Caco-2 (cell line): ENCODE measurements at regions of chr11 and their contacts with region 1.

Region 1: DNA sequence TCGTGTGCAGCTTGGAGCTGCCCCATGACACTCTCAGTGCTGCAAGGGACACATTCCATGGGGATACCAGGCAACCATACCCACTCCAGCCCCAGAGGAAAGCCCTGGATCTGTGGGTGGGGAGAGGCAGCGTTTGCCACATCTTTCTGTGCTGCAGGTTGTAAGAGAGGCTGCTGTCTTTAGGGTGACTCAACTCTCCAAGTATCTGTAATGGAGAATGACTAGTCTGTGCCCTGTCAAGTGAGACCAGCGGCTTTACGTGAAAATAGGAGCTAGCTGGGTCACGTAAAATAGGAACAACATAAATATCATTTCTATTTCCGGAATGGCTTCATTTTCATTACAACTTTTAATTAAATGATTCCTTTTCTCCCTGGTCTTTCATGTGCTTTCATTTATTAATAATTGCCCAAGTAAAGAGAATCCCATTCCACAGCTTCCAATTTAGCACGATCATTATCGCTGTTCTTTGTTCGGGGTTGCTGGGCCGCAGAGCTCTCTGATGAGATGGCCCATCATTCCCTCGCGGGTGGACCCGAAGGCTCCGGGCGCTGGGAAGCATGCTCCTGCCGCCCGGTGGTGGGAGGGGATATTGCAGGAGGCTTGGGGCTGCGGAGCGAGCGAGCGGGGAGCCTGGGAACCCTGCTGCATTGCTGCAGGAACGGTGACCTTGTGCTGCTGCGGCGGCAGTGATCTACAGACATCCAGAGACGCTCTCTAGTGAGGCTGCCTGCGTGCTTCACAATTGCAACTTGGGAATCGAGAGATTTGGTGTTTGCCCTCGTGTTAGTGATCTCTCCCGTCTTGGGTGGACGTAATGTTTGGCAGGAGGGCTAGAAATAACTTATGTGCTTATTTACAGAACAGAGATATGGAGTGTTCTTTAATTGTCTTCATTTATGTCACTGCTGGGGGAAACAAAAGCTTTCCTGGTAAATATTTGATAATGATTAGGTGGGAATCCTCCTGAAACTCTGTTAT is 10.6 kb downstream of the SLC6A5 start:
- DNase-seq: peak; percentile 80 to 91
- H3K4me3 ChIP-seq: no peak overlapping the region
- H3K4me3 Mint-ChIP-seq: peak overlapping the region; percentile 57
- H3K27ac Mint-ChIP-seq: no peak overlapping the region
- H3K4me1 ChIP-seq: 0 out of 2 replicates have a peak, but pooled peaks cover 3% of the 10 kb centered on the region
- H3K4me1 Mint-ChIP-seq: peaks cover 9% of the 10 kb centered on the region
- H3K27me3 ChIP-seq: no peaks in the 10 kb centered on the region
- H3K27me3 Mint-ChIP-seq: peaks cover 23% of the 10 kb centered on the region
- CTCF ChIP-seq: peak; percentile 92 to 97

Region 2: DNA sequence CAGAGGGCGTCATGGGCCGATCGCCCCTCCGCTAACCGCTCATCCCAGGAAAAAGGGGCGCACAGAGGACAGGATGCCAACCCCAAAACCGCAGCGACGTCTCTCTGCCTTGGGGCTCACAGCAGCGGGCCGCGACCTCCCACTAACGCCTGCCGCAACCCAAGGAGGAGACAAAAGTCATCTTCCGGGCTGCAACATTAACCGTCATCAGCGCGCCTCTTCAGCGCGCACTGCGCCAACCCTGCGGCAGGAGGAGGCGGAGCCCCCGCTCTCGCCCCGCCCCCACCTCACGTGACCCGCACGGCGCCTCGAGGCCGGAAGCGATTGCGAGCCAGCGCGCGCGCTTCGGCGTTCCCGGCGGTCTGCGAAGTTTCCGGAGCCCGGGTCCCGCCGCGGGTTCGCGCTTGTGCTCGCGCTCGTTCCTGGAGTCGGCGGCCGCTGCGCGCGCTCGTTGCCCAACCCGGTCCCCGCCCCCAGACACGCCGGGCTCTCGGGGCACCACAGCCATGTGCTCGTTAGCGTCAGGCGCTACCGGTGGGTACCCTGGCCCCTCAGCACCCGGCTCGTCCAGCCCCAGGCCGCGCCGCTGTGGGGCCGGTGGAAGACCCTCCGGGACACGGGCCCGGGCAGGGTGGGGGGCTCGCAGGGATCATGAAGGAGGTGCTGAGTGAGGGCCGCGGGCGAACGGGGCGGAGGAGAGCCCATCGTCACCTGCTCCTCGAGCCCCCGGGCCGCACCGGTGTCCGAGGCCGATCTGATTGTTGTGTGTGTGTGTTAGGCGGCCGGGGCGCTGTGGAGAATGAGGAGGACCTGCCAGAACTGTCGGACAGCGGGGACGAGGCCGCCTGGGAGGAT is 222.5 kb before region 1 on chr11 and contains the start of gene PRMT3:
- CTCF ChIA-PET with region 1: no interaction called
- POLR2A ChIA-PET with region 1: no interaction called
- intact Hi-C with region 1: loop called (anchors 2 kb)
- DNase-seq: peak; percentile 95 to 99
- H3K4me3 ChIP-seq: peak within 1 kb of the TSS; percentile 98
- H3K4me3 Mint-ChIP-seq: peak within 1 kb of the TSS; percentile 99
- H3K27ac Mint-ChIP-seq: peak within 1 kb of the TSS; percentile 99
- H3K4me1 ChIP-seq: peaks cover 11% of the 10 kb centered on the region; the same call in 1 of the 2 replicates
- H3K4me1 Mint-ChIP-seq: no peaks in the 10 kb centered on the region
- H3K27me3 ChIP-seq: no peaks in the 10 kb centered on the region
- H3K27me3 Mint-ChIP-seq: no peaks in the 10 kb centered on the region
- CTCF ChIP-seq: peak in 1 of 2 experiments; percentile 99
- total RNA-seq, gene PRMT3: 26.1 and 28.5 TPM in 2 replicates

Region 3: DNA sequence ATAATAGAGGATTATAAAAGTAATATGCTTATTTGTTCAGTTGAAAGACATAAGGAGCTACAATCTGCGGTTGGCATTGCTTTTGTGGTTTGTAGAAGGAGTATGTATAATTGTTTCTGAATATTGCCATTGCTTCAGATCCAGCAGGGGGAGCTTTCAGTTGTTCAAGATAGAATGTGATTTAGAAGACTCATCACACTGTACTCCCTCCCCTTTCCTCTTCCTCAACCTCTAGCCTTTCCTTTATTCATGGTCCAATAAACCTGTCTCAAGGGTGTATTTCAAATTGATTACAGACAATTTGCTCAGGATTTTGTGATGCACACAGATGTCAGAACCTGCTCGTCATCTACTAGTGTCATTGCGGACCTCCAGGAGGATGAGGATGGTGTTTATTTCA is 212.7 kb before region 1 on chr11:
- CTCF ChIA-PET with region 1: interaction called, 11 read pairs
- POLR2A ChIA-PET with region 1: no interaction called
- intact Hi-C with region 1: loop called (anchors 1 kb)
- DNase-seq: peak in 1 of 2 experiments; percentile 43
- H3K4me3 ChIP-seq: no peak overlapping the region
- H3K4me3 Mint-ChIP-seq: no peak overlapping the region
- H3K27ac Mint-ChIP-seq: no peak overlapping the region
- H3K4me1 ChIP-seq: no peaks in the 10 kb centered on the region
- H3K4me1 Mint-ChIP-seq: no peaks in the 10 kb centered on the region
- H3K27me3 ChIP-seq: no peaks in the 10 kb centered on the region
- H3K27me3 Mint-ChIP-seq: no peaks in the 10 kb centered on the region
- CTCF ChIP-seq: peak; percentile 59 to 70

Region 4: GRCh38 chr11:20443596-20443995 is 166.4 kb before region 1 on chr11:
- CTCF ChIA-PET with region 1: interaction called, 5 read pairs
- POLR2A ChIA-PET with region 1: no interaction called
- intact Hi-C with region 1: loop called (anchors 1 kb)
- DNase-seq: peak in 1 of 2 experiments; percentile 11
- H3K4me3 ChIP-seq: no peak overlapping the region
- H3K4me3 Mint-ChIP-seq: no peak overlapping the region
- H3K27ac Mint-ChIP-seq: no peak overlapping the region
- H3K4me1 ChIP-seq: no peaks in the 10 kb centered on the region
- H3K4me1 Mint-ChIP-seq: no peaks in the 10 kb centered on the region
- H3K27me3 ChIP-seq: no peaks in the 10 kb centered on the region
- H3K27me3 Mint-ChIP-seq: no peaks in the 10 kb centered on the region
- CTCF ChIP-seq: peak; percentile 25 to 50

Region 5: DNA sequence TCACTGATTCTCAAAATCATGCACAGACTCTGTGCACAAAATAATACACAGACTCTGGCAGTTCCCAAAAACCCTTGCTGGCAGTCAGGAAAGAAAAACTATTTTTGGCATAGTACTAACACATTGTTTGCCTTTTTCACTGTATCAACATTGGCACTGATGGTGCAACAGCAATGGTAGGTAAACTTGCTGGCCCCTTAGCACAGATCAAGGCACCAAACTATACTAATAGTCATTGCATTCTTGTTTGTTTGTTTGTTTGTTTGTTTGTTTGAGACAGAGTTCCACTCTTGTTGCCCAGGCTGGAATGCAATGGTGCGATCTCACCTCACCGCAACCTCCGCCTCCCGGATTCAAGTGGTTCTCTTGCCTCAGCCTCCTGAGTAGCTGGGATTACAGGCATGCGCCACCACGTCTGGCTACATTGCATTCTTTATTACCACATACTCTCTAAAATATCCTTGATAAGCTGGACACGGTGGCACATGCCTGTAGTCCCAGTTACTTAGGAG is 91.6 kb before region 1 on chr11:
- CTCF ChIA-PET with region 1: no interaction called
- POLR2A ChIA-PET with region 1: no interaction called
- intact Hi-C with region 1: loop called (anchors 5 kb)
- DNase-seq: no peak
- H3K4me3 ChIP-seq: no peak overlapping the region
- H3K4me3 Mint-ChIP-seq: no peak overlapping the region
- H3K27ac Mint-ChIP-seq: no peak overlapping the region
- H3K4me1 ChIP-seq: no peaks in the 10 kb centered on the region
- H3K4me1 Mint-ChIP-seq: no peaks in the 10 kb centered on the region
- H3K27me3 ChIP-seq: no peaks in the 10 kb centered on the region
- H3K27me3 Mint-ChIP-seq: peaks cover 14% of the 10 kb centered on the region
- CTCF ChIP-seq: no peak

Region 6: DNA sequence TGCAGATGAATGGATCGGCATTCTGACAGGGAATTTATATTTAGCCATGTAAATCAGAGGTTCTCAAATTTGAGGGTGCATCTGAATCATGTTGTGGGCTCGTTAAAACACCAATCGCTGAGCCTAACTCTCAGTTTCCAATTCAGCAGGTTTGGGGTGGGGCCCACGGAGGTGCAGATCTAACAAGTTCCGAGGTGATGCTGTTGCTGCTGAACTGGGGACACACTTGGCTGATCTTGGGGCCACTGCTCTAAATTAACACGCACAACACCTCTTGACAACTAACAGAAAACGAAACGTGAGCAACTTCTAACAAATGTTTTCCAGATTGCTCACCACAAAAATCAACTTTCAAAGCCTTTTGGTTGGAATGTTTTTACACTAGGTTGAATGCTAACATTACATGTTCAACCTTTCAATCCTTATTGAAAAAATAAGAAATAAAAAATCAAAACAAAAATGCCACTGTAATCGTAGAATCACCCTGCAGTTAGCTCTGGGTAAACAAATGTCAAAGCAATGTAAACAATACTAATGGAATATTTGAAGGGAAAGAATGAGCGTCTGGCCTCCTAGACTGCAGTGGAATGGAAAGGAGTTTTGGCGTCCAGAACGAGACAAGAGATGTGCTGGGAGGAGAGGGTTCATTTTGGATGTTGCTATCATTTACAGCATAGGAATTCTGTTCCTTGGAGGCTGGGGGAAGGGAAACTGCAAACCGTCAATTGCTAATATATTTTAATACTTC is 78.9 kb before region 1 on chr11:
- CTCF ChIA-PET with region 1: interaction called, 5 read pairs
- POLR2A ChIA-PET with region 1: no interaction called
- intact Hi-C with region 1: loop called (anchors 5 kb)
- DNase-seq: no peak
- H3K4me3 ChIP-seq: no peak overlapping the region
- H3K4me3 Mint-ChIP-seq: no peak overlapping the region
- H3K27ac Mint-ChIP-seq: no peak overlapping the region
- H3K4me1 ChIP-seq: peaks cover 4% of the 10 kb centered on the region; the same call in 1 of the 2 replicates
- H3K4me1 Mint-ChIP-seq: peaks cover 7% of the 10 kb centered on the region
- H3K27me3 ChIP-seq: no peaks in the 10 kb centered on the region
- H3K27me3 Mint-ChIP-seq: peaks cover 9% of the 10 kb centered on the region
- CTCF ChIP-seq: no peak